ENCODE measurements at regions of chr3 and their contacts with region 1.

Region 1: DNA sequence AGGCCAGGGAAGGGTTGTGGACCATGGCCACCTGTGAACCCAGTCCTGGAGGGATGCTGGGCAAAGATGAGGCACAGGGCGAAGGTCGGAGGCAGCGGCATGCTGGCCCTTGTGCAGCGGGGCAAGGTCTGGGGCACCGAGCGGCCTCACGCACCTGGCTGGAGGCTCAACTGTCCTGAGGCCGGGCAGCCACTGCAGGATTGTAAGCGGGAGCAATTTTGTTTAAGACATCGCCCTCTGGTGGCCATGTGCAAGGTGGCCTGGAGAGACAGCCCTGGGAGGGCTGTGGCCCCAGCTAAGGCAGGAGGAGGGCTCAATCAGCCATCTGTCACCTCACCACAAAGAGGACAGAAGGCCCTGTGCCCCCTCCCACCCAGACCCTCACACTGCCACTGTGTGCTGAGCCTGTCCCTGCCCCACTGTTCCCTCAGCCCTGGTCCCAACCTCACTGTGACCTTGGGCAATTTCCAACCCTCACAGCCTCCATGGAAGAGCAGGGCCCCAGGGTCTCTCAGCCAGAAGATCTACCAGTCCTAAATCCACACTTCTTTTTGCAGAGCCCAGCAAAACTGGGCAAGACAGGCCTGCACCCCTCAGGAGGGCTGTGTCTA is 46.2 kb downstream of the TPRA1 start:
- DNase-seq: peak in 9 of 10 donors; percentile 50 to 79 (median 75)
- H3K4me3 ChIP-seq: no peak overlapping the region
- H3K27ac ChIP-seq: peak overlapping the region in 41 of 59 donors; percentile 1 to 82 (median 57)
- H3K27me3 ChIP-seq: no peaks in the 10 kb centered on the region
- CTCF ChIP-seq: peak; percentile 56 to 90 (median 82)

Region 2: DNA sequence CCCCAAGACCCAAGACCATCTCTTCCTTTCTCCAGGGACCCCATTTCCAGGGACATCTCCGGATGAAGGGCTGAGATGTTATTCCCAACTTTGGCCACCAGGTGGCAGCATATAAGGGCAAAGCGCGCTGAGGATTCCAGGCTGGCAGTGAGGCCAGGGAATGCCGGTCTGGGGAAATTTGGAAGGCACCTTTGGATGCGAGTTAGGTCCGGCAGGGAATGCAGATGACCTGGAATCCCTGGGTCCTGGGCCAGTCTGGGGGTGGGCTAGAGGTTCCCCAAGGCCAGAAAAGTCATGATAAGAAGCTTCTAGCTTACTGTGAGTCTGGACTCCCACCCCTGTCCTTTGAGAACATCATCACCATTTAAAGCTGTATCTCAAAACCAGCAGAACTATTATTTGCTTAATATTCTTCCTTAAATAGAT is 1021.9 kb before region 1 on chr3:
- intact Hi-C with region 1: loop called (anchors 5 kb)
- DNase-seq: peak in 9 of 10 donors; percentile 36 to 77 (median 68)
- H3K4me3 ChIP-seq: no peak overlapping the region
- H3K27ac ChIP-seq: peak overlapping the region in 10 of 59 donors; percentile 12 to 85 (median 58)
- H3K27me3 ChIP-seq: peaks cover 0 to 17% (median 0%) of the 10 kb centered on the region in 45 donors
- CTCF ChIP-seq: peak; percentile 82 to 97 (median 92)

Region 3: GRCh38 chr3:126679318-126679751 is 865.0 kb before region 1 on chr3:
- intact Hi-C with region 1: loop called (anchors 2 to 5 kb)
- DNase-seq: peak; percentile 75 to 92 (median 86)
- H3K4me3 ChIP-seq: peak overlapping the region in 31 of 59 donors; percentile 1 to 45 (median 19)
- H3K27ac ChIP-seq: peak overlapping the region in 5 of 59 donors; percentile 10 to 46 (median 34)
- H3K27me3 ChIP-seq: peaks cover 0 to 5% (median 0%) of the 10 kb centered on the region in 45 donors
- CTCF ChIP-seq: peak; percentile 91 to 100 (median 98)

Region 4: GRCh38 chr3:126752303-126752842 is 791.9 kb before region 1 on chr3:
- intact Hi-C with region 1: loop called (anchors 5 kb)
- DNase-seq: peak; percentile 72 to 87 (median 80)
- H3K4me3 ChIP-seq: no peak overlapping the region
- H3K27ac ChIP-seq: peak overlapping the region in 5 of 59 donors; percentile 8 to 38 (median 20)
- H3K27me3 ChIP-seq: no peaks in the 10 kb centered on the region
- CTCF ChIP-seq: peak; percentile 67 to 96 (median 88)